ENCODE measurements at regions of chr11 and their contacts with region 1.

Region 1: DNA sequence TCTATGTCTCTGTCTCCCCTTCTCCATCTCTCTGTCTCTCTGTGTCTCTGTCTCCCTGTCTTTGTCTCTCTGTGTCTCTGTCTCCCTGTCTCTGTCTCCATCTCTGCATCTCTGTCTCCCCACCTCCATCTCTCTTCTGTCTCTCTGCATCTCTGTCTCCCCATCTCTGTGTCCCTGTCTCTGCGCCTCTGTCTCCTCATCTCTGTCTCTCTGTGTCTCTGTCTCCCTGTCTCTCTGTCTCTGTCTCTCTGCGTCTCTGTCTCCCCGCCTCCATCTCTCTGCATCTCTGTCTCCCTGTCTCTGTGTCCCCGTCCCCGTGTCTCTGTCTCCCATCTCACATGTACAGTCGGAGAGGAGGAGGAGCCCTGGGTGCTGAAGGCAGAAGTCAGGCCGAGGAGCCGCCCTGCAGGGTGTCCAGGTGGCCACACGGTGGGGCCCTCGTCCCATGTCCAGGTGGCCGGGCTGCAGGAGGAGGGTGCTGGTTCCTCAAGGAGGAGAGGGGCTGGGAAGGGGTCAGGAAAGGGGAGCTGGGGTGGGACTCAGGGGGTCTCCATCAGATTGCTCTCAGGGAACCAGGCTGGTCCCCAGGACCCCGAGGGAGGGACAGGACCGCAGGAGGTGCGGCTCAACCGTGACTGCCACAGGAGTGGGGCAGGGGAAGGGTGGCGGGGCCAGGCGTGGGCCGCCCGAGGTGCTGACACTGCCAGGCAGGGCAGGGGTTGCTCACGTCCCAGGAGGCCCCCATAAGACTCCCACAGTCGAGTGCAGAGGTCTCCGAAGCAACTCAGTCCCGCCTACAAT is 25.6 kb upstream of the TH start:
- DNase-seq: peak; percentile 61 to 85 (median 75)
- H3K4me3 ChIP-seq: no peak overlapping the region
- H3K27ac ChIP-seq: no peak overlapping the region
- H3K4me1 ChIP-seq: no peaks in the 10 kb centered on the region
- H3K27me3 ChIP-seq: no peaks in the 10 kb centered on the region
- CTCF ChIP-seq: peak; percentile 33 to 75 (median 75)
- EP300 ChIP-seq: no peak
- POLR2A ChIP-seq: no peak

Region 2: GRCh38 chr11:2256923-2257716 is 60.0 kb after region 1 on chr11:
- intact Hi-C with region 1: no loop called
- DNase-seq: peak in 3 of 5 donors; percentile 7 to 19 (median 14)
- H3K4me3 ChIP-seq: no peak overlapping the region
- H3K27ac ChIP-seq: no peak overlapping the region
- H3K4me1 ChIP-seq: no peaks in the 10 kb centered on the region
- H3K27me3 ChIP-seq: no peaks in the 10 kb centered on the region
- CTCF ChIP-seq: no peak
- EP300 ChIP-seq: no peak
- POLR2A ChIP-seq: no peak

Region 3: GRCh38 chr11:2298795-2299761 is 101.9 kb after region 1 on chr11:
- intact Hi-C with region 1: loop called in 2 of 4 experiments (anchors 2 to 5 kb)
- DNase-seq: peak in 1 of 5 donors; percentile 15
- H3K4me3 ChIP-seq: no peak overlapping the region
- H3K27ac ChIP-seq: no peak overlapping the region
- H3K4me1 ChIP-seq: peaks cover 2% of the 10 kb centered on the region
- H3K27me3 ChIP-seq: no peaks in the 10 kb centered on the region
- CTCF ChIP-seq: no peak
- EP300 ChIP-seq: no peak
- POLR2A ChIP-seq: no peak

Region 4: DNA sequence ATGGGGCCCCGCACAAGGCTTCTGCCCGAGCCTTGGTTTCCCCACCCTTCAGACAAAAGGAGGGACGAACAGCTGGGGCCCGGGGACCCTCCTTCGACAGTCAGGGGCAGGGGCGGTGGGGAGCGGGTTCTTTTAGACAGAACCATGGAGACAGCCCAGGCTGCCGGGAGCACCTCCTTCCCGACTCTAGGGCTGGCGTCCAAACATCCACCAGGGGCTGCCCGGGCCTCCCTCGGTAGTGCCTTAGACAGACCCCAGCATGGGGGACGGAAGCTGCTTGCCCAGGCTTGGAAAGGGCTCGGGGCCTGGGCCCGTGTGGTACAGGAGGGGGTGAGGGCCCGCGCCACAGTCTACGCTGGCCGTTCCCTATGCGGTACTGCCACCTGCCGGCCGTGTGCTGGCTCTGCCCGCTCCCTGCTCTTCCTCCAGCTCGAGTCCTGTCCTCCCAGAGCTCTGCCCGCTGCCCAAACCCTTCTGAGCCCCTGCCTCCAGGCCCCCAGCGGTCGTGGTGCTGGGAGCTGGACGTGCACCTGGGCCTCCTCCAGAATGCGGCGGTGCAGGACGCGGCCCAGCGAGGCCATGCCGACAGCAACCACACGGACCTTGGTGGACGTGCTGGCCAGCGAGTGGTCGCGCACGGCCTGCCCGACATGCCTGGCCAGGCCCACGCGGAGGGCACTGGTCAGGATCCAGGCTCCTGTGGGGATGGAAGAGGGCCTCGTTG is 223.5 kb after region 1 on chr11:
- intact Hi-C with region 1: loop called (anchors 2 to 5 kb)
- DNase-seq: peak; percentile 66 to 86 (median 75)
- H3K4me3 ChIP-seq: no peak overlapping the region
- H3K27ac ChIP-seq: no peak overlapping the region
- H3K4me1 ChIP-seq: peaks cover 2% of the 10 kb centered on the region
- H3K27me3 ChIP-seq: no peaks in the 10 kb centered on the region
- CTCF ChIP-seq: peak; percentile 90 to 94 (median 92)
- EP300 ChIP-seq: no peak
- POLR2A ChIP-seq: peak; percentile 11

Region 5: DNA sequence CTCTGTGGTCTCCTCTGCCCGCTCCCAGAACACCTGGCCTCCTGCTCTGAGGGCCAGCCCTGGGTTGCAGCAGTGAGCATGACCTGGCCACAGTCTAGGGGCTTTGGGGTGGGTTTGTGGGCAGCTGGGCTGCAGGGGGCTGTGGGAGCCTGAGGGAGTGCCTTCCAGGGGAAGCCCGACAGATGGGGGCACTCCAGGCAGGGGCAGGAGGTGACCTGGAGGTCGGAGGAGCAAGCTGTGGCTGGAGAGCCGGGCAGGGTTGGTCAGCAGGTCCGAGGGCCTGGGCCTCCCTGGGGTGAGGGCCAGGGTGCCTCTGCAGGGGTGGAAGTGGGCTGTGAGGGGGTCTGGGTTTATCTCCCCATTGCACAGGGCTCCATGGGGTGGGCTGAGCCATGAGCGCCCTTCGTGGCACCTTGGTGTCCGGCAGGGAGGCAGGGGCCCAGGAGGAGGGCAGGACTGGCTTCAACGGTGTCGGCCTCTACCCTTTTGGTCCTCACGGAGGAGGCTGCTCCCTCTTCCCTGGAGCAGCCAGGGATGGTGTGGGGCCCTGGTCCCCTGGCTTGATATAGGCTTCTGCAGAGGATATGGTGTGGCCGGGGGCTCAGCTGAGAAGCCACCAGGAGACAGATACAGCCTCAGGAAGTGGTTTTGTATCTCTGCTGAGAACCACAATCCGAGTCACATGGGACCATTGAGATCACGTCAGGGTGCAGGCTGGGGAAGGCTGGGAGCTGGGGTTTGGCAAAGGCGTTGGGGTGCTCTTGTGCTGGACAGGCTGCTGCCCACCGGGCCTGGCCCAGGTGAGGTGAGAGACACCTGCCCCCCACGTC is 269.9 kb after region 1 on chr11:
- intact Hi-C with region 1: no loop called
- DNase-seq: no peak
- H3K4me3 ChIP-seq: no peak overlapping the region
- H3K27ac ChIP-seq: no peak overlapping the region
- H3K4me1 ChIP-seq: no peaks in the 10 kb centered on the region
- H3K27me3 ChIP-seq: no peaks in the 10 kb centered on the region
- CTCF ChIP-seq: no peak
- EP300 ChIP-seq: no peak
- POLR2A ChIP-seq: no peak

Region 6: DNA sequence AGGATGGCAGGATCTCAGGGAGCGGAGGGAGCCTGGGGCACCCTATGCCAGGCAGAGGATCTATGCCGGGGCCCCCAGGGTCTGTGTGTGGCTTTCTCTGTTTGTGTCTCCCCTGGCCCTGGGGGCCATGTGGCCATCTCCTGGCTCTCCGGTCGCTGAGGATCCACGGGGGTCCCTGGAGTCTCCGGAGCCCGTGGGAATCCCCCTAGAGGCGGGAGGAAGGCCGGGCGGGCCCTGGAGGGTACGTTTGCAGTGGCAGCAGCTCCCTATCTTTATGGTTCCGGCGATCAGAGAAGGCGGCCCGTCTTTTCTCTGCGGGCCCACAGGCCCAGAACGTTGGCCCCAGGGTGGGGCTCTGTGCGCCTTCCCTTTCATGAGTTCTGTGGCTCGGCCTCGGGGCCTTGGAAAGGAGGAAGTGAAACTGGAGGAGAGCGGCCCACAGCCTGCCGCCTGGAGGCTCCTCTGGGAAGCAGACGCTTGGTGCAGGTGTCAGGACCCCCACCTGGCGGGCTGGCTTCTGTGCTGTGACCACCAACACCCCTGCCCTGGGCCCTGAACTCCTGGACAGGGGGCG is 329.7 kb after region 1 on chr11:
- intact Hi-C with region 1: loop called in 2 of 4 experiments (anchors 5 to 10 kb)
- DNase-seq: peak; percentile 9 to 38 (median 18)
- H3K4me3 ChIP-seq: no peak overlapping the region
- H3K27ac ChIP-seq: no peak overlapping the region
- H3K4me1 ChIP-seq: no peaks in the 10 kb centered on the region
- H3K27me3 ChIP-seq: no peaks in the 10 kb centered on the region
- CTCF ChIP-seq: no peak
- EP300 ChIP-seq: no peak
- POLR2A ChIP-seq: no peak

Measured in ovary (tissue), 10 donors.